ENCODE measurements at regions of chr20 and their contacts with region 1.

Region 1: DNA sequence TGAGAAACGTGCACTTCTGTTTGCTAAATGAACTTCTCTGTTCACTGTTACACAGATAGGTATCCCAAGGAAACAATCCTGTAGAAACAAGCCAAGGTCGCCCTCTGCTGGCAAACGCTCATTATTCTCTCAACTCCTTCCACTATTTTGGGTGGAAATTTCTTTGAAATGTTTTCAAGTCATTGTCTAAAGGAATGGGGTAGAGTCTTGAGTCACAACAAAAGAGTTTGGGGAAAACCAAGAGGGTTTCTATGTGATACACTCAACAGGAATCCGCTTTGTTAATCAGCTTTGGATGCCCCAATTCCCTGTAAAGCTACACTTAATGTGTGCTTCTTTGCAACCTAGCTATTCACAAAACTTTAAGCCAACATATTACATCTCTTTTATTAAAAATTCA is 4.6 kb upstream of the RAE1 start:
- DNase-seq: peak; percentile 62 to 77
- ATAC-seq: peak in 2 of 4 donors; percentile 51 to 54
- H3K4me3 ChIP-seq: no peak overlapping the region
- H3K27ac ChIP-seq: no peak overlapping the region
- H3K4me1 ChIP-seq: no peaks in the 10 kb centered on the region
- H3K27me3 ChIP-seq: no peaks in the 10 kb centered on the region
- CTCF ChIP-seq: peak; percentile 70

Region 2: DNA sequence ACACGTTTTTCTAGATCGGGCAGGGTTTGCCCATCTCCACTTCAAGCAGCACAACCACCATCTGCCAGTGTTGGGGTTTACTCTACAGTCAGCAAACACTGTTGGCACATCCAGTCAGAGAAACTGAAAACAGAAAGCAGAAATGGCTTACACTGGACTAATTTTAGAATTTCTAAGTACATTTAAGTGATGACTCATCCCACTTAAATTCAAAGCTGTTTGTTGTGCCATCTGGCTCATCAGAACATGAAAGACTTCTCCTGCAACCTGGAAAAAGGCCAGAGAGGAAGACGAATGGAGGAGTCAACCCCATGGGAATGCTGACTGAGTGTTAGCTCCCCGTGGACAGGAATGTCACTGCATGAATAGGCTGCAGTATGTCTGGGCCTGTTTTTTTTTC is 791.6 kb before region 1 on chr20:
- intact Hi-C with region 1: loop called (anchors 5 kb)
- DNase-seq: no peak
- ATAC-seq: peak; percentile 32 to 66 (median 58)
- H3K4me3 ChIP-seq: no peak overlapping the region
- H3K27ac ChIP-seq: no peak overlapping the region
- H3K4me1 ChIP-seq: peaks cover 6% of the 10 kb centered on the region
- H3K27me3 ChIP-seq: peaks cover 0 to 2% (median 0%) of the 10 kb centered on the region in 3 donors
- CTCF ChIP-seq: no peak

Region 3: DNA sequence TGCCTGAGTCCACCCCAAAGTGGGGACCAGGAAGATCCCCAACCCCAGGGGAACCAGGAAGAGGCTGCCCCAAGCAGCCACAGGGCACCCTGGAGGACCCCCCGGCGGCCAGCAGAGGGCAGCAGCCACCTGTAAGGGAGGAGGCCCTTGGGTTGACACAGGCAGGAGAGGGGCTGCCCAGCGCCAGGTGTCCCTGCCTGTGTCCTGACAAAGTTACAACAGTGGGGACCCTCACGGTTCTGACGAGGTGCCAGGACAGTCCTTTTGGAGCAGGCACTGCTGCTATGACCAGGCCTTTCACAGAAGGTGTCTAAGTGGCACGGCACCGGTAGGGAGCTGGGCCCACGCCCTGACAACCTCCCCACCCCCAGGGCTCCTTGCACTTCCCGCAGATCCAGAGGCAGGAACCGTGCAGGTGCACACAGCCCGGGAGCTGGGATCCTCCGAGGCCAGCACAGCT is 256.8 kb before region 1 on chr20:
- intact Hi-C with region 1: loop called (anchors 2 to 5 kb)
- DNase-seq: peak; percentile 64 to 71
- ATAC-seq: peak in 3 of 4 donors; percentile 48 to 72 (median 63)
- H3K4me3 ChIP-seq: no peak overlapping the region
- H3K27ac ChIP-seq: no peak overlapping the region
- H3K4me1 ChIP-seq: no peaks in the 10 kb centered on the region
- H3K27me3 ChIP-seq: peaks cover 0 to 21% (median 2%) of the 10 kb centered on the region in 3 donors
- CTCF ChIP-seq: peak; percentile 62

Region 4: GRCh38 chr20:57142667-57143066 is 203.8 kb before region 1 on chr20:
- intact Hi-C with region 1: no loop called
- DNase-seq: no peak
- ATAC-seq: no peak
- H3K4me3 ChIP-seq: no peak overlapping the region
- H3K27ac ChIP-seq: no peak overlapping the region
- H3K4me1 ChIP-seq: no peaks in the 10 kb centered on the region
- H3K27me3 ChIP-seq: peaks cover 0 to 4% (median 0%) of the 10 kb centered on the region in 3 donors
- CTCF ChIP-seq: no peak